ENCODE measurements at regions of chr11 and their contacts with region 1.

Region 1: DNA sequence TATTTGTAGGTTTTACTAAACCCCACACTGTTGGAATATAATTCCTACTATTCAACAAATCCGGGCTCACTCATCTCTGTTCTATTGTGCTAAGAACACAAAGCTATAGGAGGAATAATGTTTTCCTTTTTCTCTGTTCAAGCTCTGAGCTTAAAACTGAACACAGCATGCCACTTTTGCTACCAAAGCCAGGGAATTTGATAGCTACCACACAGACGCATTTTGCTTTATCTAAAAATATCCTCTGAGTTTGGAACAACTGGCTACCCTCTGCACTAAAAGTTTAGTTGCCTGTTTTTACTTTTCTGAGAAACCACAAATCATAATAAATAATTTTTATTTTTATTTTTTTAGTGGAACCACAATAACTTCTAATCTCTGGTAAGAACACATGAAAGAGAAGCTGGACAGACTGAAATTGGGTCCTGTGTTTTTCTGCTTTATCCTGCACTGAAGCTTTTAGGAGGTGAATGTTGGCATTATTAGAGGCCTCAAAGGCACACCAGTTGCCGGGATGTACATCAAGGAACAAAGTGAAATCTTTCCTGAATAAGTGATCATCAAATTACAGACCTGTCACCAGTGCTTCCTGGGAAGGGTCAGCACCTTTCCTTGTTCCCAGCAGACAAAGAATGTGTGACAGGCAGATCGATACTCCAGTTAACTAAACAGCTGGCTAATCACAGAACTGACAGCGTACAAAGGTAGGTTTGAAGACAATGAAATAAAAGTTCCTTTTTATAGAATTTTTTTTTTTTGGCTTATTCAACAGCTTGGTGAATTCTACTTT is 523.2 kb upstream of the TENM4 start:
- DNase-seq: no peak

Region 2: DNA sequence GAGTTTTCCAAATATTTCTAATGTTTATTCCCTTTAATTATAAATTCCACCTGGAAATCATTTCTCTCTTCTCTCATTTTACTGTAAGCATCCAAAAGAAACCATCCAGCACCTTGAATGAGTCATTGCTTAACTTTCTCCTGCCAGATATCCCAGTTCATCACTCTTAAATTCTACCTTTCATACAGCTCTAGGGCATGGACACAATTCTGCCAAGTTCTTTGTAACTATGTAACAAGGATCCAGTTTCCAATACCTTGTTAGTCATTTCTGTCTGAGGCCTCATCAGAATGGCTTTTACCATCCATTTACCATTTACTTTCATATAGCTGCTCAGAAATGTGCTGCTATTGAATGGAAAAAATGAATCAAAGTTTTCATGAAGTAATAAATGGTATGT is 67.8 kb before region 1 on chr11:
- intact Hi-C with region 1: no loop called
- DNase-seq: no peak

Region 3: GRCh38 chr11:79940151-79940550 is 23.9 kb before region 1 on chr11:
- intact Hi-C with region 1: loop called in 1 of 2 experiments (anchors 1 kb)
- DNase-seq: no peak

Region 4: DNA sequence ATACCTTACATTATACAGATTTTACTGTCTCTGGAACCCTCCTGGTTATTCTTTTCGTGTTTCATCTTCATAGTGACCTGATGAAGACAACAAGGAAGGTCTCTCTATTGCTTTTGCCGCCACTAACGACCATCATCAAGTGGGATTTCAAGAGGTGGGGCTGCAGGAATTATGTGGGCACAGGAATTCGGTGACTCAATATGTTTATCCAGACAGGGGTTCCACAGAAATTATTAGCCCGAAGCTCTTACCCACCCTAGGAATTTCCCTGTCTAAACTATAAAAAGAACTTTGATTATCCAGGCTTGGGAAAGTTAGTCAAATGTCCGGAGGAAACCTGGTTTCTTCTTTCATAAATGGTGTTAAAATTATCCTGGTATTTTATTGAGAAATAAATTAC is 43.6 kb after region 1 on chr11:
- intact Hi-C with region 1: loop called in 1 of 2 experiments (anchors 2 kb)
- DNase-seq: no peak